Ascending aorta (tissue), 2 donors: ENCODE measurements at regions of chr14 and their contacts with region 1.

Region 1: GRCh38 chr14:36661756-36662498 is at the start of gene PAX9:
- DNase-seq: no peak
- H3K4me3 ChIP-seq: peak within 1 kb of the TSS; percentile 51 to 63
- H3K27ac ChIP-seq: peak within 1 kb of the TSS in 1 of 2 donors; percentile 48
- H3K4me1 ChIP-seq: peaks cover 7 to 28% of the 10 kb centered on the region in 2 donors
- H3K27me3 ChIP-seq: peaks cover 32% of the 10 kb centered on the region
- CTCF ChIP-seq: no peak
- total RNA-seq, gene PAX9: not detected

Region 2: DNA sequence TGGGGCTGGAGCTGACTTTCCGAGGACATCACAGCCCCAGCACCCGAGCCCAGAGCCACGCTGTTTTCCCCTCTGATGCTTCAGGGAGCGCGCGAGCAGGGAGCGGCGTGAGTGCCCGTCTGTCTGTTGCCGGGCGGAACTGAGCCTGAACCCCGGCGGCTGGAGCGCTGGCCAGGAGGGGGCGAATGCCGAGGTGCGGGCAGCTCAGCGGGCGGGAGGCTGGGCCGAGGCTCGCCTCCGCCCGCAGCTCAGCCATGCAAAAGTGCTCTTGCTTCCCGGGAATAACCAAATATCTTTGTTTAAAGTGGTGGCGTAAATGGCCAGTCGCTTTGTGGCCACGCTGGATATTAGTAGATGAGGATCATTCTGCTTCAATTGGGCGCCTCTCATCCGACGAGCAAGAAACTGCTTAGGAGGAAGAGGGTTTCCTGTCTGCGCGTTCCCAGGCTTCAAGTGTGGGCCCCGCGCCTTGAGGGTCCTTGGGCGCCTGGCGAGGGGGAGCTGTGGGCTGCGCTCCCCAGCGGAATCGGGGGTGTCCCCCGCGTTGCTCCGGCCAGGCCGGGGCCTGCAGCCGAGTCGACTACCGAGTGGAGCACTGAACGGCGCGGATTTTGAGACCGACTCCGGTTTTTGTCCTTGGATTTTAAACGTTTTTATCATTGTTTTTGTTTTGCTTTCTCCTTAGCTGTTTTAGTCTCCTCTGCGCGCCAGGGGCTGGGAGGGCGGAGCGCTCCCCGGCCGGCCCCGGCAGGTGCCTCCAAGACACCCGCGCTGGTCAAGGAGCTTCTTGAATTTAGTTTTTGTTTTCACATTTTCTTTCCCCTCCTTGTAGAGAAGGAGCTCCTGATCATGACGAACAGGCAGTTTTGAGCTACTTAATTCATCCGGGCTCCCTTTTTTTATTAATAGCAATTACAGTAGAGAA is 141.1 kb before region 1 on chr14:
- intact Hi-C with region 1: loop called (anchors 10 kb)
- DNase-seq: no peak
- H3K4me3 ChIP-seq: peak overlapping the region; percentile 48 to 52
- H3K27ac ChIP-seq: no peak overlapping the region
- H3K4me1 ChIP-seq: peaks cover 6 to 32% of the 10 kb centered on the region in 2 donors
- H3K27me3 ChIP-seq: peaks cover 54% of the 10 kb centered on the region
- CTCF ChIP-seq: peak in 2 of 3 experiments; percentile 6 to 13

Region 3: GRCh38 chr14:36835145-36835544 is 173.2 kb after region 1 on chr14:
- intact Hi-C with region 1: no loop called
- DNase-seq: no peak
- H3K4me3 ChIP-seq: no peak overlapping the region
- H3K27ac ChIP-seq: no peak overlapping the region
- H3K4me1 ChIP-seq: no peaks in the 10 kb centered on the region
- H3K27me3 ChIP-seq: no peaks in the 10 kb centered on the region
- CTCF ChIP-seq: no peak

Region 4: DNA sequence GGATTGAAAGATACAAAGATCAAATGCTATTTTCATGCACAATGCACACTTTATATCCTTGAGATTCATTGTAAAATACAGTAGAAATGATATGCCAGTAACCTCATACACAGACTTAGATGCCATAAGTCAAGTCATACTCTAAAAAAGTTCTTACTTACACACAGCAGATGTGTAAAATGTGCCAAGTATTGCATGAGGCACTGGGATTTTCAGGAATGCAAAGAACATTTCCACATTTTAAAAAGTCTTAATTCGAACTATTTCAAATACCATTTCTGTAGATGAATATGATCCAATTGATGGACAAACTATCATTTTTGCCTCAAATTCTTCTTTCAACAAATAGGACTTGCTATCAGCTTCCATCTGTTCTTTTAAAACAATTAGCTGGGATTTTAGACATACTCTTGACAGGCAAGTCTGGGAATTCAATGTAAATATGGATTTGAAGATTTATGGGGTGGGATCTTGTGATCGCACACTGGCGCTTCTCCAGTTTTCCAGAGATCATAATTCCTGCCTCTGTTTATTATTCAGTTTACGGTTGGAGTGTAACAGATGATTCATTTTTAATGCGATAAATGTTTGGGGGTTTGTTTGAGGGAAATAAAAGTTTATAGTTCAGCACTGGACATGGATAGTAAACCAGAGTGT is 183.6 kb after region 1 on chr14:
- intact Hi-C with region 1: no loop called
- DNase-seq: no peak
- H3K4me3 ChIP-seq: no peak overlapping the region
- H3K27ac ChIP-seq: no peak overlapping the region
- H3K4me1 ChIP-seq: no peaks in the 10 kb centered on the region
- H3K27me3 ChIP-seq: no peaks in the 10 kb centered on the region
- CTCF ChIP-seq: no peak

Region 5: GRCh38 chr14:37139710-37140109 is 477.8 kb after region 1 on chr14:
- intact Hi-C with region 1: loop called (anchors 5 kb)
- DNase-seq: no peak
- H3K4me3 ChIP-seq: no peak overlapping the region
- H3K27ac ChIP-seq: no peak overlapping the region
- H3K4me1 ChIP-seq: peaks cover 0 to 2% of the 10 kb centered on the region in 2 donors
- H3K27me3 ChIP-seq: no peaks in the 10 kb centered on the region
- CTCF ChIP-seq: no peak